Activated B cell treated with CpG ODN at 0.5 μM for 24 hours (primary cell): ENCODE measurements at regions of chr3 and their contacts with region 1.

Region 1: GRCh38 chr3:13022348-13023234 is 50.6 kb downstream of the IQSEC1 start:
- DNase-seq: peak; percentile 70
- ATAC-seq: peak; percentile 57
- H3K4me3 Mint-ChIP-seq: peak overlapping the region; percentile 100
- H3K27ac Mint-ChIP-seq: peak overlapping the region; percentile 94
- H3K4me1 Mint-ChIP-seq: peaks cover 81% of the 10 kb centered on the region
- H3K27me3 Mint-ChIP-seq: no peaks in the 10 kb centered on the region
- CTCF ChIP-seq: no peak

Region 2: DNA sequence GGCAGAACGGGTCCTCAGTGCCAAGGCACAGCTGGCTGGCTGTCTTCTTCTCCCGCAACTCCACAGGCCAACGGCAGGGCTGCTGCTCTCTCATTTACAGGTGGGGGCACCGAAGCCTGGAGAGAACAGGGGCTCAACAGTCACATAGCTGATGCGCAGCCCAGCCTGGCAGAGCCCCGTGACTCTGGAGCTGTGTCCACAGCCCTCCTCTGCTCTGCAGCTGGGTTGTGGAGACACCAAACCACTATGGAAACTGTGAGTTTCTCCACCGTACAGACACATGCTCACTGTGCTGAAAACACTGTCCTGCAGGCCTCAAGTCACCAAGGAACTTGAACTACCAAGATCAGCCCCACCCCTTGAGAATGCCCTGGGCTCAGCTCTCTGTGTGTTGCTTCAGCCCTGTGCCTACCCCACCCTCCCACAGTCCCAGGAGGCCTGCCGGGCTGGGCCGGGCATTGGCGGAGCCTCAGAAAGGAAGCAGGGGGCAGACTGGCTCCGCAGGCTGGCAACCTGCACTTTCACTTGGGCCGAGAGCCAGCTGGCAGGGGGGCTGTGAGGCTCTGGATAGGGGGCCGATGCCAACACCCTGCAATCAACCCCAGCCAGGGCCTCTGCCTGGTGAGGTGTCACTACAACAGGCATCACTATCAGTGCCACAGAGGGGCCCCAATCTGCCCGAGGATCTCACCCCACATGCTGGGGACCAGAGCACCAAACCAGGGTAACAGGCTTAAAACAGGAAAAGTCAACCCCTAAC is 67.5 kb before region 1 on chr3:
- CTCF ChIA-PET with region 1: no interaction called
- POLR2A ChIA-PET with region 1: interaction called, 8 read pairs
- intact Hi-C with region 1: loop called (anchors 2 kb)
- DNase-seq: peak; percentile 67
- ATAC-seq: peak; percentile 95
- H3K4me3 Mint-ChIP-seq: peak overlapping the region; percentile 63
- H3K27ac Mint-ChIP-seq: peak overlapping the region; percentile 82
- H3K4me1 Mint-ChIP-seq: peaks cover 86% of the 10 kb centered on the region
- H3K27me3 Mint-ChIP-seq: no peaks in the 10 kb centered on the region
- CTCF ChIP-seq: no peak

Region 3: DNA sequence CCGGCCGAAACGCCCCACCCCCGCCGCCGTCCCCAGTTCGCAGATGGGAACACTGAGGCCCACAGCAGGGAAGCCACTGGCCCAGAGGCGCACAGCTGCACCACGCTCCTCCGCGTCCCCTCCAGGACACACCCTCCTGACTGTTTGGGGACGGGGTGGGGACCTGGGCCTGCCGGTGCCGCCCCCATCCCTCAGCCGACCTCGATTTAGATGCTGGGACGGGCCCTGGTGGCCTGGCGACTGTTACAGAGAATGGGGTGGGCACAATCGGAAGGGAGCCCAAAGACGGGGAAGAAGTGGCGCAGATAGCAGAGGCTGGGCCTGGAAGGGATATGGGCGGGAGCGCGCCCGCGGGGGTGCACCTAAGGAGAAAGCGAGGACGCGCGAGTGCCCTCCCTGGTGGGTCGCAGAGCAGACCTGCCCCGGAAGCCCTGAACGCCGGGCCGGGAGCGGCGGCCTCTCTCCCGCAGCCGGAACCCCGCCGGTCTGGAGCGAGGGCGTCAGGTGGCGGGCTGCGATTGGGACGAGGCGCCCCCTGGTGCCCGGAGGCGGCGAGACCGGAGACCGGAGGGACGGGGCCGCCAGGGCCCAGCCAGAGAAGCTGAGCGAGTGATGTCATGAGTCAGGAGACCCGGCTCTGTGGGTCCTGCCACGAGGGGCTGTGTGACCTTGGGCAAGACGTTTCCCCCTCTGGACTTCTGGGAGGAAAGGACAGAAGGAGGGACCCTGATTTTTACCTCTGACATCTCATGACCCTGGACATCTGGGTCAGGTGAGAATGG is 27.8 kb before region 1 on chr3:
- CTCF ChIA-PET with region 1: interaction called, 11 read pairs
- POLR2A ChIA-PET with region 1: interaction called, 465 read pairs
- intact Hi-C with region 1: loop called (anchors 1 kb)
- DNase-seq: peak; percentile 81
- ATAC-seq: peak; percentile 70
- H3K4me3 Mint-ChIP-seq: peak overlapping the region; percentile 89
- H3K27ac Mint-ChIP-seq: peak overlapping the region; percentile 88
- H3K4me1 Mint-ChIP-seq: peaks cover 85% of the 10 kb centered on the region
- H3K27me3 Mint-ChIP-seq: no peaks in the 10 kb centered on the region
- CTCF ChIP-seq: peak; percentile 93

Region 4: DNA sequence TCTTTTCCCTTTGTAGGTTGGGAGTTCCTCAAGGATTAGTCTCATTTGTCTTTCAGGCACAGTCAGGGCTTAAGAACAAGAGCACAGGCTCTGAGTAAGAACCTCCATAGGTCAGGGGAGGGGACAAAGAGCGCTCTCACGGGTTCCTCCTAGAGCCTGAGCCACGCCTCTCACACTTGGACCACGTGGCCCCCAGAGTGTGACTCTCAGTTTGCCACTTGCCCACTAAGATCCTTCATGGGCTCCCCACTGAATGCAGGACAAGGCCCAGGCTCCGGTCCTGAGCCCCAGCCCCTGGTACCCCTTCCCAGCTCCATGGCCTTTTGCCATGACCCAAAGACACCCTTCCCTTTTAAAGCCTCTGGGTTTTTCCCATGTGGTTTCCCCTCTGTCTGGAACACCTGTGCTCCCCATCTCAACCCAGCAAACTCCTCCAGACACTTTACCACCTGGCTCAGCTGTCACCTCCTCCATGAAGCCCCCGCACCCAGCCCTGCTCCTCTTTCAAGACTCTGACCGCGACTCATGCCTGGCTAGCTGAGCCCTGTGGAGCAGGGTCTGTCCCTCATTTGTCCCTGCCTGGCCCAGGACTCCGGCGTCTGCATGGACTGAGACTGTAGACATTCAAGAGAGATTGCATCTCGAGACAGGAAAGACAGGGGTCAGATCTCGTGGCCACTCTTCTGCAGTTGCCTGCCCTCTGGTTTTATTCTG is 17.9 kb after region 1 on chr3:
- CTCF ChIA-PET with region 1: interaction called, 4 read pairs
- POLR2A ChIA-PET with region 1: interaction called, 170 read pairs
- intact Hi-C with region 1: loop called (anchors 1 kb)
- DNase-seq: peak; percentile 50
- ATAC-seq: peak; percentile 99
- H3K4me3 Mint-ChIP-seq: no peak overlapping the region
- H3K27ac Mint-ChIP-seq: peak overlapping the region; percentile 81
- H3K4me1 Mint-ChIP-seq: peaks cover 37% of the 10 kb centered on the region
- H3K27me3 Mint-ChIP-seq: no peaks in the 10 kb centered on the region
- CTCF ChIP-seq: no peak

Region 5: GRCh38 chr3:13073326-13074005 is 50.9 kb after region 1 on chr3 and contains the start of gene IQSEC1:
- CTCF ChIA-PET with region 1: interaction called, 4 read pairs
- POLR2A ChIA-PET with region 1: interaction called, 32 read pairs
- intact Hi-C with region 1: loop called (anchors 1 kb)
- DNase-seq: peak; percentile 76
- ATAC-seq: peak; percentile 66
- H3K4me3 Mint-ChIP-seq: peak within 1 kb of the TSS; percentile 86
- H3K27ac Mint-ChIP-seq: peak within 1 kb of the TSS; percentile 85
- H3K4me1 Mint-ChIP-seq: peaks cover 62% of the 10 kb centered on the region
- H3K27me3 Mint-ChIP-seq: no peaks in the 10 kb centered on the region
- CTCF ChIP-seq: no peak
- total RNA-seq, gene IQSEC1: 260 and 296 TPM in 2 replicates

Region 6: GRCh38 chr3:13110678-13111116 is 88.1 kb after region 1 on chr3:
- CTCF ChIA-PET with region 1: no interaction called
- POLR2A ChIA-PET with region 1: interaction called, 34 read pairs
- intact Hi-C with region 1: no loop called
- DNase-seq: peak; percentile 62
- ATAC-seq: peak; percentile 90
- H3K4me3 Mint-ChIP-seq: peak overlapping the region; percentile 73
- H3K27ac Mint-ChIP-seq: peak overlapping the region; percentile 96
- H3K4me1 Mint-ChIP-seq: peaks cover 60% of the 10 kb centered on the region
- H3K27me3 Mint-ChIP-seq: no peaks in the 10 kb centered on the region
- CTCF ChIP-seq: no peak

Region 7: DNA sequence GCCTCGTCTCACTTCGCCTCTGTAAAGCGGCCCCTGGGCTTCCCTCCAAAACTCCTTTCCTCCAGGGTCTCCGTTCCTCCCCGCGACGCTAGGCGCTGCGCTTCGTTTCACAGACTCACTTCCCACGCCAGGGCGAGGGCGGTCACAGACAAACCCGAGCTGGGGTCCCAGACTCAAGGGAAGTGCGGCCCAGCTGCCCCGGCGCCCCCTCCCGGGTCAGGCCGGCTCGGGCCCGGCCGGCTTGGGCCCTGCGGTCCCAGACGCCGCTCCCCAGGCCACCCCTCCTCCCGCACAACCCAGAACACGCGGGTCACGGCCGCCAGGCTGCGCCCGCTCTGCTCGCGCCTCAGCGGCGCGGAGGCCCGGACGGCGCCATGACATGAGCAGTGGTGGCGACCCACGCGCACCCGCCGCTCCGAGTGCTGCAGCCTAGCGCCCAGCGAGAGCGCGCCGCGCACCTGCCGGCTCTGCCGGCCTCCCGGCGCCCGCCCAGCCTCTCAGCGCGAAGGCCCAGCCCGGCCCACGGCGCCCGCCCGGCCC is 397.0 kb after region 1 on chr3:
- CTCF ChIA-PET with region 1: no interaction called
- POLR2A ChIA-PET with region 1: interaction called, 13 read pairs
- intact Hi-C with region 1: loop called (anchors 5 kb)
- DNase-seq: peak; percentile 69
- ATAC-seq: peak; percentile 59
- H3K4me3 Mint-ChIP-seq: peak overlapping the region; percentile 91
- H3K27ac Mint-ChIP-seq: peak overlapping the region; percentile 98
- H3K4me1 Mint-ChIP-seq: peaks cover 62% of the 10 kb centered on the region
- H3K27me3 Mint-ChIP-seq: no peaks in the 10 kb centered on the region
- CTCF ChIP-seq: no peak

Region 8: GRCh38 chr3:13627681-13628080 is 605.1 kb after region 1 on chr3:
- CTCF ChIA-PET with region 1: no interaction called
- POLR2A ChIA-PET with region 1: no interaction called
- intact Hi-C with region 1: no loop called
- DNase-seq: no peak
- ATAC-seq: no peak
- H3K4me3 Mint-ChIP-seq: no peak overlapping the region
- H3K27ac Mint-ChIP-seq: no peak overlapping the region
- H3K4me1 Mint-ChIP-seq: no peaks in the 10 kb centered on the region
- H3K27me3 Mint-ChIP-seq: no peaks in the 10 kb centered on the region
- CTCF ChIP-seq: no peak